Caco-2 (cell line): ENCODE measurements at regions of chr11 and their contacts with region 1.

Region 1: DNA sequence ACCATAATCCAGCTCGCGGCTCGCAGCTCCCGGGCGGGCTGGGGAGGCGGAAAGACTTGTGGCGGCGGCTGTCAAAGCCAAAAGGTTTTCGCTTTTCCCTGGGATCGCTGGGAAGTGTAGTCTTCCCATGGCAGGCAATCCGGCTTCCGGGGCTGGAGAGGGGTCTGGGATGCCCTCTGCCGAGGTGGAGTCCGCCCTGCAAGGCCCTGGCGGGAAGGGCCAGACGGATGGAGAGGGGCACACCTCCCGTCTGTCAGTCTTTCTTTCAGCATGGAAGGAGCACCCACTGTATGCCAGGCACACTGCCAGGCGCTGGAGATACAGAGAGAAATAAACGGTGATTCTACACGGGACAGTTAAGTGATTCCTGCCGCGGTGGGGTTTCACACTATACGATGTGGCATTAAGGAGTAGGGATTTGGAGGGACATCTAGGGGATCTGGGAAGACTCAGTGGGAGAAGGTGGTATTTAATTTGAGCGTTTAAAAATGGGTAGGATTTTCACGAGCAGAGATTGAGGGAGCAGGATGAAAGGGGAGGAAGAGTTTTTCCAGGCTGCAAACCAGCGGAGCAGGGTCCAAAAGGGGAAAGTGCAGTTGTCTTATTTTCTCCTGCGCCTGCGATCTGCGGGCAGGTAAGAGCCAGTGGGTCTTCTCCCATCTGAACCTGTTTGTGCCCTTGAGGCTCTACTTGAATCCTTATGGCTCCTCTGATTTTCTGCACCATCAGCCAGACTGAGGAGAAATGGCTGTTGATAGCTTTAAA is at the start of gene BACE1:
- DNase-seq: peak; percentile 94 to 95
- H3K4me3 ChIP-seq: peak within 1 kb of the TSS; percentile 70
- H3K4me3 Mint-ChIP-seq: peak within 1 kb of the TSS; percentile 74
- H3K27ac Mint-ChIP-seq: no peak within 1 kb of the TSS
- H3K4me1 ChIP-seq: peaks cover 7% of the 10 kb centered on the region
- H3K4me1 Mint-ChIP-seq: peaks cover 7% of the 10 kb centered on the region
- H3K27me3 ChIP-seq: no peaks in the 10 kb centered on the region
- H3K27me3 Mint-ChIP-seq: no peaks in the 10 kb centered on the region
- CTCF ChIP-seq: peak; percentile 50 to 83
- total RNA-seq, gene BACE1: 11.0 and 11.2 TPM in 2 replicates

Region 2: GRCh38 chr11:117232092-117232878 is 84.1 kb before region 1 on chr11 and contains the start of gene RNF214:
- CTCF ChIA-PET with region 1: interaction called, 6 read pairs
- POLR2A ChIA-PET with region 1: no interaction called
- intact Hi-C with region 1: loop called (anchors 1 kb)
- DNase-seq: peak; percentile 87 to 92
- H3K4me3 ChIP-seq: peak within 1 kb of the TSS; percentile 63
- H3K4me3 Mint-ChIP-seq: peak within 1 kb of the TSS; percentile 97
- H3K27ac Mint-ChIP-seq: peak within 1 kb of the TSS; percentile 95
- H3K4me1 ChIP-seq: peaks cover 20% of the 10 kb centered on the region
- H3K4me1 Mint-ChIP-seq: peaks cover 16% of the 10 kb centered on the region
- H3K27me3 ChIP-seq: no peaks in the 10 kb centered on the region
- H3K27me3 Mint-ChIP-seq: no peaks in the 10 kb centered on the region
- CTCF ChIP-seq: peak; percentile 73 to 99
- total RNA-seq, gene RNF214: 51.2 and 55.8 TPM in 2 replicates

Region 3: GRCh38 chr11:117271208-117271607 is 45.2 kb before region 1 on chr11:
- CTCF ChIA-PET with region 1: no interaction called
- POLR2A ChIA-PET with region 1: no interaction called
- intact Hi-C with region 1: loop called (anchors 2 kb)
- DNase-seq: peak in 1 of 2 experiments; percentile 44
- H3K4me3 ChIP-seq: no peak overlapping the region
- H3K4me3 Mint-ChIP-seq: peak overlapping the region; percentile 43
- H3K27ac Mint-ChIP-seq: peak overlapping the region; percentile 89
- H3K4me1 ChIP-seq: peaks cover 38% of the 10 kb centered on the region
- H3K4me1 Mint-ChIP-seq: peaks cover 31% of the 10 kb centered on the region
- H3K27me3 ChIP-seq: no peaks in the 10 kb centered on the region
- H3K27me3 Mint-ChIP-seq: no peaks in the 10 kb centered on the region
- CTCF ChIP-seq: no peak

Region 4: GRCh38 chr11:117327567-117328374 is 11.4 kb after region 1 on chr11 and contains the start of gene CEP164:
- CTCF ChIA-PET with region 1: interaction called, 6 read pairs
- POLR2A ChIA-PET with region 1: interaction called, 8 read pairs
- intact Hi-C with region 1: loop called (anchors 1 kb)
- DNase-seq: peak; percentile 99
- H3K4me3 ChIP-seq: peak within 1 kb of the TSS; percentile 58
- H3K4me3 Mint-ChIP-seq: no peak within 1 kb of the TSS
- H3K27ac Mint-ChIP-seq: no peak within 1 kb of the TSS
- H3K4me1 ChIP-seq: 0 out of 2 replicates have a peak, but pooled peaks cover 7% of the 10 kb centered on the region
- H3K4me1 Mint-ChIP-seq: peaks cover 7% of the 10 kb centered on the region
- H3K27me3 ChIP-seq: no peaks in the 10 kb centered on the region
- H3K27me3 Mint-ChIP-seq: no peaks in the 10 kb centered on the region
- CTCF ChIP-seq: no peak
- total RNA-seq, gene CEP164: 48.9 and 50.0 TPM in 2 replicates

Region 5: DNA sequence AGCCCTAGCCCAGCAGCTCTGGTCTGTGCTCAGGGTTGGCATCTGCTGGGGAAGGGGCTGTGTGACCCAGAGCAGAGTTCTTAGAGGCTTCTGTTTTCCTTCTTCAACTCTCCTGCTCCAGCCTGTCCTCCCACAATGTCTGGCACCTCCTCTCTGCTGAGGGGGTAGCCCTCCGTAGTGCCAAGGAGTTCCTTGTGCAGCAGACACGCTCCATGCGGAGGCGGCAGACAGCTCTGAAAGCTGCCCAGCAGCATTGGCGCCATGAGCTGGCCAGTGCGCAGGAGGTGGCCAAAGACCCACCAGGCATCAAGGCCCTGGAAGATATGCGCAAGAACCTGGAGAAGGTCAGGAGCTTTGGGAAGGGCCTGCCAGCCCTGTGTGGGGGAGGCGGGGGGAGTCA is 80.6 kb after region 1 on chr11:
- CTCF ChIA-PET with region 1: no interaction called
- POLR2A ChIA-PET with region 1: no interaction called
- intact Hi-C with region 1: no loop called
- DNase-seq: peak in 1 of 2 experiments; percentile 28
- H3K4me3 ChIP-seq: no peak overlapping the region
- H3K4me3 Mint-ChIP-seq: no peak overlapping the region
- H3K27ac Mint-ChIP-seq: no peak overlapping the region
- H3K4me1 ChIP-seq: no peaks in the 10 kb centered on the region
- H3K4me1 Mint-ChIP-seq: no peaks in the 10 kb centered on the region
- H3K27me3 ChIP-seq: no peaks in the 10 kb centered on the region
- H3K27me3 Mint-ChIP-seq: no peaks in the 10 kb centered on the region
- CTCF ChIP-seq: no peak